GM13976 (cell line): ENCODE measurements at regions of chr2 and their contacts with region 1.

Region 1: DNA sequence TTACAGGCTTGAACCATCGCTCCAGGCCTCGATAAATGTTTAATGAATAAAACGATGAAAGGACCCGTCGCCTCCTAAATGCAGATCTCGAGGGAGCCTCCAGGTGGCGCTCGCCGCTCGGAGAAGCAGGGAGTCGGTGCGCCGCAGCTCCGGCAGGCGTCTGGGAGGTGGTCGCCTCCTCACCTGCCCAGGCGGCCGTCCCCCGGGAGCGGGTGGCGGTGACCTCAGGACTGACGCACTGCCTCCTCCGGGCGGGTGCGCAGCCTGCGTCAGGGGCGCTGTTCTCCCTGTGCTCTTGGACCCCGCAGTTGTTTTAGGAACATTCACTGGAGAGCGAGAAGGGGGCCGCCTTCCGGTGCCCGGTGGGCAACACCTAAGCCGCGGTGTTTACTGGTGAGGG is 38.6 kb upstream of the POLE4 start:
- DNase-seq: peak; percentile 87
- CTCF ChIP-seq: peak; percentile 93

Region 2: DNA sequence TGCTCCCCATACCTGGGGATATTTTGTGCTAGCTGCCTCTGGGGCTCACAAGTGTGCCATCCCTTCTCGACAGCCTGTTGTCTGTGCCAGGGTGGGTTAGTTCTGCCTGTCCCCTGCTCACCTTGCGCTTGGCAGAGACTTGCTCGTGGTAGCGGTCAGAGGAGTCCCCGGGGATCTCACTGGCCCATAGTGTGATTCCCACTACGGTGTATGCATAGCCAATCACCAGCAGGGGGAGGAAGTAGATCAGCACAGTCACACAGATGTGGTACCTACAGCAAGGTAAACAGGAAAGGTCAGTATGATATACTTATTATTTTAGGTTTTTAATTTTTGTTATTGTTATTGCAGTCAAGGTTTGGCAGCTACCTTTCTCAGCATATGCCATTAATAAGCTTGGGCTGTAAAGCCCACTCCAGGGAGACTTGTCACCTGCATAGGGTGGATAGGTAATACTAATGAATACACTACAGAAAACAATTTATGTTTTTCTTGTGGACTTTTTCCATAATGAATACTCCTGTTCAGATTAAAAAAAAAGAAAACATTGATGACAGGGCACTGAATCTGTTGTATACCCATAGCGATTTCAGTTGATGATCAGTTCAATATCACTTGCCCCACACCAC is 133.8 kb after region 1 on chr2:
- in situ Hi-C with region 1: loop called (anchors 10 kb)
- DNase-seq: peak; percentile 58
- CTCF ChIP-seq: peak; percentile 72

Region 3: GRCh38 chr2:75241696-75242095 is 321.9 kb after region 1 on chr2:
- in situ Hi-C with region 1: loop called (anchors 25 kb)
- DNase-seq: no peak
- CTCF ChIP-seq: peak; percentile 38

Region 4: GRCh38 chr2:75592028-75592427 is 672.2 kb after region 1 on chr2:
- in situ Hi-C with region 1: no loop called
- DNase-seq: no peak
- CTCF ChIP-seq: no peak

Region 5: DNA sequence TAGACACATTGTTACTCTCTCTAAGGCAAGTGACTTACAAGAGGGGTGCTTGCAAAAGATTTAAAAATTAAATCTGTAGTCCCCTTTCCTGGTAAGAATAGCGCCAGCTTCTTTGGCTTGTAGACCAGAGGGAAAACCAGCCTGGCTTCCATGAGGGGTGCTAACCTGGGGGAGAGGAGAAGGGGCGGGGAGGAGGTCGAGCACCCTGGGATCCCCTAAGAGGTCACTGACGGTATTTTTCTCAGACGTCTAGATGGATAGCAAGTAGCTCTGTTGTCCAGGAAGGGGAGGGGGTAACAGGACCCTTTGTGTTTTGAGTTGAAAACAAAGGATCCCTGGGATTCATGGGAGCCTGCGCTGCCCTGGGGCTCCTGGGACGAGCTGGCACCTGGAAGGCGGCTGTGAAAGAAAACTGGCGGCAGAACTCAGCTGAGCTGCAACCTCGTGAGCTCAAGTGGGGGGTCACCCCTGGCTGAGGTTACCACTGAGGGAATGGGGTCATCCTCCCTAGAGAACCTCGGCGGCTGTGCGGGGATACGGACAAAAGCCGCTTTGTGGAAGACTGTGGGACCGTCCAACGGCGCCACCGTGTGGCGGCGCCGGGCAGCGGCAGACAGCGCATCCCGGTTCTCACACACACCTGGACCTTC is 689.0 kb after region 1 on chr2:
- in situ Hi-C with region 1: loop called (anchors 25 kb)
- DNase-seq: peak; percentile 81
- CTCF ChIP-seq: peak; percentile 96